Activated T-helper 1 cell treated with anti-CD3 and anti-CD28 coated beads, Interleukin-12 subunit alpha, Interleukin-12 subunit beta, Interleukin-2, Interleukin-4 antibody, amounts not matched to agents 30 ng/mL and 10 ng/mL and 1 ng/mL, durations not matched to agents 14 hours and 24 hours and 36 hours (primary cell): ENCODE measurements at regions of chr5 and their contacts with region 1.

Region 1: GRCh38 chr5:139246394-139246793 is 47.1 kb upstream of the MATR3 start:
- DNase-seq: peak; percentile 8
- H3K4me3 Mint-ChIP-seq: peak overlapping the region; percentile 62
- H3K27ac Mint-ChIP-seq: peak overlapping the region; percentile 83
- H3K4me1 Mint-ChIP-seq: peaks cover 32% of the 10 kb centered on the region
- H3K27me3 Mint-ChIP-seq: peaks cover 3% of the 10 kb centered on the region

Region 2: GRCh38 chr5:139147483-139148087 is 98.8 kb before region 1 on chr5:
- intact Hi-C with region 1: loop called (anchors 1 kb)
- DNase-seq: no peak
- H3K4me3 Mint-ChIP-seq: no peak overlapping the region
- H3K27ac Mint-ChIP-seq: no peak overlapping the region
- H3K4me1 Mint-ChIP-seq: peaks cover 23% of the 10 kb centered on the region
- H3K27me3 Mint-ChIP-seq: no peaks in the 10 kb centered on the region